Panc1 (cell line): ENCODE measurements at regions of chr10 and their contacts with region 1.

Region 1: GRCh38 chr10:72875250-72876055 is 18.1 kb upstream of the OIT3 start:
- DNase-seq: peak; percentile 24
- ATAC-seq: 0 out of 2 replicates have a peak, but pooled peaks have one; percentile 58
- H3K4me3 ChIP-seq: no peak overlapping the region
- H3K27ac ChIP-seq: no peak overlapping the region
- H3K4me1 ChIP-seq: no peaks in the 10 kb centered on the region
- H3K27me3 ChIP-seq: no peaks in the 10 kb centered on the region
- CTCF ChIP-seq: peak; percentile 81; the same call in 1 of the 2 replicates

Region 2: GRCh38 chr10:72665925-72666324 is 209.5 kb before region 1 on chr10:
- CTCF ChIA-PET with region 1: no interaction called
- POLR2A ChIA-PET with region 1: no interaction called
- in situ Hi-C with region 1: no loop called
- intact Hi-C with region 1: no loop called
- DNase-seq: no peak
- ATAC-seq: no peak
- H3K4me3 ChIP-seq: no peak overlapping the region
- H3K27ac ChIP-seq: no peak overlapping the region
- H3K4me1 ChIP-seq: no peaks in the 10 kb centered on the region
- H3K27me3 ChIP-seq: no peaks in the 10 kb centered on the region
- CTCF ChIP-seq: no peak

Region 3: GRCh38 chr10:72890086-72890485 is 14.6 kb after region 1 on chr10:
- CTCF ChIA-PET with region 1: no interaction called
- POLR2A ChIA-PET with region 1: interaction called, 14 read pairs
- in situ Hi-C with region 1: no loop called
- intact Hi-C with region 1: no loop called
- DNase-seq: no peak
- ATAC-seq: peak; percentile 48; the same call in 1 of the 2 replicates
- H3K4me3 ChIP-seq: no peak overlapping the region
- H3K27ac ChIP-seq: no peak overlapping the region
- H3K4me1 ChIP-seq: no peaks in the 10 kb centered on the region
- H3K27me3 ChIP-seq: no peaks in the 10 kb centered on the region
- CTCF ChIP-seq: no peak